T-cell (primary cell): ENCODE measurements at regions of chr15 and their contacts with region 1.

Region 1: DNA sequence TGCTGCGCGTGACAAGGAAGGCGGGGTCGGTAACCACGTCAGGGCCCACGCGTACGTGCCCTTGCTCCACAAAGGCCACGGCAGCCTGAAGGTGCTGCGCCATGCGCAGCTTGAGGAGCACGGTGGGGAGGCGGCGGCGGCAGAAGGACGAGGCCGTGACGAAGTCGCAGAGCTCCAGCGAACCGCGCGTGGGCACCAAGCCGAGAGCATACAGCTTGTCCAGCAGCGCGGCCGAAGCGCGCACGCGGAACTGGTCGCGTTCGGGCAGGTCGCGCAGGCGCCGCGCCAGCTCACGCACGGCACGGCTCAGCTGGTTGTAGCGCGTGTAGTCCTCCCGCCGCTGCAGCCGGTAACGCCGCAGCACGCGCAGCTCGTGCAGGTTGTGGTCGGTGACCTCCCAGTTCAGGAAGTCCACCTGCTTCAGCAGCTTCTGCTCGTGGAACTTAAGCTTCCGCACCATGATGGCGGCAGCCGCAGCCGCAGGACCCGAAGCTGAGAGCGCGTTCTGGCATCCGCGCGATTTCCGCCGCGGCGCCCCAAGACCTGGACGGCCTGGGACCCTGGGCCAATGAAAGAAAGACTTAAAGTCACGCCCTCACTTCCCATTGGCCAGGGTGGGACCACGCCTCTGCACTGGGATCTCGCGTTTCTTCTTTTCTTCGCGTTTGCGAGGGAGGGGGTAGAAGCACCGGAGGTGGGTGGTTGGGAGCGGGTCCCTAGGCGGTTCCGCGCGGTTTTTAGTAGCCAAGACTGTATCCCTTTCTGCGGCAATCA is at the start of gene IMP3:
- DNase-seq: peak; percentile 79 to 97 (median 92)
- ATAC-seq: peak; percentile 89 to 95 (median 92)
- H3K4me3 ChIP-seq: peak within 1 kb of the TSS; percentile 86
- H3K4me3 Mint-ChIP-seq: peak within 1 kb of the TSS; percentile 91 to 93 (median 91)
- H3K27ac ChIP-seq: peak within 1 kb of the TSS; percentile 81
- H3K27ac Mint-ChIP-seq: peak within 1 kb of the TSS; percentile 94 to 95
- H3K4me1 ChIP-seq: peaks cover 26 to 54% of the 10 kb centered on the region in 2 experiments
- H3K4me1 Mint-ChIP-seq: peaks cover 38 to 51% (median 39%) of the 10 kb centered on the region in 3 donors
- H3K27me3 ChIP-seq: no peaks in the 10 kb centered on the region
- H3K27me3 Mint-ChIP-seq: no peaks in the 10 kb centered on the region
- total RNA-seq, gene IMP3: 39.6 to 86.6 (median 81.8) TPM

Region 2: GRCh38 chr15:75367913-75368688 is 271.8 kb before region 1 on chr15 and contains the start of gene MAN2C1:
- CTCF ChIA-PET with region 1: interaction called in 1 of 2 experiments, 18 read pairs
- POLR2A ChIA-PET with region 1: no interaction called
- DNase-seq: peak; percentile 73 to 96 (median 84)
- ATAC-seq: peak; percentile 92 to 94 (median 92)
- H3K4me3 ChIP-seq: peak within 1 kb of the TSS; percentile 91 to 93
- H3K4me3 Mint-ChIP-seq: peak within 1 kb of the TSS; percentile 89 to 91 (median 90)
- H3K27ac ChIP-seq: peak within 1 kb of the TSS; percentile 92
- H3K27ac Mint-ChIP-seq: peak within 1 kb of the TSS; percentile 95
- H3K4me1 ChIP-seq: peaks cover 3 to 18% of the 10 kb centered on the region in 2 experiments
- H3K4me1 Mint-ChIP-seq: peaks cover 16 to 27% (median 26%) of the 10 kb centered on the region in 3 donors
- H3K27me3 ChIP-seq: no peaks in the 10 kb centered on the region
- H3K27me3 Mint-ChIP-seq: no peaks in the 10 kb centered on the region
- total RNA-seq, gene MAN2C1: 357 to 529 (median 447) TPM

Region 3: GRCh38 chr15:75407083-75407482 is 232.8 kb before region 1 on chr15:
- CTCF ChIA-PET with region 1: no interaction called
- POLR2A ChIA-PET with region 1: interaction called in 1 of 2 experiments, 12 read pairs
- DNase-seq: no peak
- ATAC-seq: no peak
- H3K4me3 ChIP-seq: no peak overlapping the region
- H3K4me3 Mint-ChIP-seq: no peak overlapping the region
- H3K27ac ChIP-seq: no peak overlapping the region
- H3K27ac Mint-ChIP-seq: no peak overlapping the region
- H3K4me1 ChIP-seq: no peaks in the 10 kb centered on the region
- H3K4me1 Mint-ChIP-seq: peaks cover 7 to 13% (median 12%) of the 10 kb centered on the region in 3 donors
- H3K27me3 ChIP-seq: no peaks in the 10 kb centered on the region
- H3K27me3 Mint-ChIP-seq: no peaks in the 10 kb centered on the region

Region 4: GRCh38 chr15:75453703-75454470 is 186.0 kb before region 1 on chr15:
- CTCF ChIA-PET with region 1: interaction called in 1 of 2 experiments, 18 read pairs
- POLR2A ChIA-PET with region 1: interaction called, 9 to 11 read pairs
- DNase-seq: peak; percentile 84 to 99 (median 97)
- ATAC-seq: peak; percentile 41 to 48 (median 45)
- H3K4me3 ChIP-seq: peak overlapping the region; percentile 78 to 93
- H3K4me3 Mint-ChIP-seq: peak overlapping the region; percentile 94 to 100 (median 95)
- H3K27ac ChIP-seq: peak overlapping the region; percentile 88
- H3K27ac Mint-ChIP-seq: peak overlapping the region; percentile 98 to 99
- H3K4me1 ChIP-seq: peaks cover 22 to 41% of the 10 kb centered on the region in 2 experiments
- H3K4me1 Mint-ChIP-seq: peaks cover 38 to 46% (median 40%) of the 10 kb centered on the region in 3 donors
- H3K27me3 ChIP-seq: no peaks in the 10 kb centered on the region
- H3K27me3 Mint-ChIP-seq: no peaks in the 10 kb centered on the region

Region 5: DNA sequence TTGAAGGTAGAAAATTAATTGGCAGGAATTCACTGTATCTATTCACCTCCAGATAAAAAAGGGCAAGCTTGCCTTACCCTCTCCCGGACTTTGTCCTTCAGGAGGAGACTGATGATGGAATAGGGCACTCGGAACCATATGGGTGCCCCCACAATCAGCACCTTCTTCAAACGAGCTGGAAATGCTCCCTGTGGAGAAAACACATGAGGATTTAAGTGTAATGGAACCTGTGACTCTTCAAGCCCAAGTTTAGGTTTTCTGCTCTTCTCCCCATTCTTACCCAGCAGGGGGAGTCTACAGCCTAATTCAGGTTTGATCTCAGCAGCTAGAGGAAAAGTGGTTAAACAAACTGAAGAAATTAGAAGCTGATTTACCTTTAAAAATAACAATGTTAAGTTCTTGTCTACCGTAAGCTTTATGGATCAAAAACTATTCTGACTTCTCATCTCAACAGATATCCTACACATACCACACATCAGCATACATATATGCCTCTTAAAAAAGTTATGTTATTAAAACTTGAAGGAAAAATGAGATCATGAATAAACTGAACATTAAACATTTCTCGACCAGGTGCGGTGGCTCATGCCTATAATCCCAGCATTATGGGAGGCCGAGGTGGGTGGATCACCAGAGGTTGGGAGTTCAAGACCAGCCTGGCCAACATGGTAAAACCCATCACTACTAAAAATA is 130.9 kb before region 1 on chr15:
- CTCF ChIA-PET with region 1: interaction called, 4 to 28 read pairs
- POLR2A ChIA-PET with region 1: no interaction called
- DNase-seq: peak in 19 of 35 experiments; percentile 1 to 62 (median 16)
- ATAC-seq: peak in 2 of 4 experiments; percentile 33 to 52
- H3K4me3 ChIP-seq: no peak overlapping the region
- H3K4me3 Mint-ChIP-seq: no peak overlapping the region
- H3K27ac ChIP-seq: no peak overlapping the region
- H3K27ac Mint-ChIP-seq: no peak overlapping the region
- H3K4me1 ChIP-seq: no peaks in the 10 kb centered on the region
- H3K4me1 Mint-ChIP-seq: peaks cover 2 to 5% (median 4%) of the 10 kb centered on the region in 3 donors
- H3K27me3 ChIP-seq: no peaks in the 10 kb centered on the region
- H3K27me3 Mint-ChIP-seq: no peaks in the 10 kb centered on the region

Region 6: GRCh38 chr15:75606711-75607699 is 32.9 kb before region 1 on chr15:
- CTCF ChIA-PET with region 1: interaction called in 1 of 2 experiments, 11 read pairs
- POLR2A ChIA-PET with region 1: no interaction called
- DNase-seq: peak in 26 of 35 experiments; percentile 3 to 49 (median 16)
- ATAC-seq: peak; percentile 80 to 84 (median 82)
- H3K4me3 ChIP-seq: peak overlapping the region in 1 of 2 donors; percentile 21
- H3K4me3 Mint-ChIP-seq: peak overlapping the region; percentile 40 to 62 (median 59)
- H3K27ac ChIP-seq: peak overlapping the region; percentile 86
- H3K27ac Mint-ChIP-seq: peak overlapping the region; percentile 92 to 99
- H3K4me1 ChIP-seq: peaks cover 36 to 47% of the 10 kb centered on the region in 2 experiments
- H3K4me1 Mint-ChIP-seq: peaks cover 39 to 53% (median 43%) of the 10 kb centered on the region in 3 donors
- H3K27me3 ChIP-seq: no peaks in the 10 kb centered on the region
- H3K27me3 Mint-ChIP-seq: no peaks in the 10 kb centered on the region

Region 7: DNA sequence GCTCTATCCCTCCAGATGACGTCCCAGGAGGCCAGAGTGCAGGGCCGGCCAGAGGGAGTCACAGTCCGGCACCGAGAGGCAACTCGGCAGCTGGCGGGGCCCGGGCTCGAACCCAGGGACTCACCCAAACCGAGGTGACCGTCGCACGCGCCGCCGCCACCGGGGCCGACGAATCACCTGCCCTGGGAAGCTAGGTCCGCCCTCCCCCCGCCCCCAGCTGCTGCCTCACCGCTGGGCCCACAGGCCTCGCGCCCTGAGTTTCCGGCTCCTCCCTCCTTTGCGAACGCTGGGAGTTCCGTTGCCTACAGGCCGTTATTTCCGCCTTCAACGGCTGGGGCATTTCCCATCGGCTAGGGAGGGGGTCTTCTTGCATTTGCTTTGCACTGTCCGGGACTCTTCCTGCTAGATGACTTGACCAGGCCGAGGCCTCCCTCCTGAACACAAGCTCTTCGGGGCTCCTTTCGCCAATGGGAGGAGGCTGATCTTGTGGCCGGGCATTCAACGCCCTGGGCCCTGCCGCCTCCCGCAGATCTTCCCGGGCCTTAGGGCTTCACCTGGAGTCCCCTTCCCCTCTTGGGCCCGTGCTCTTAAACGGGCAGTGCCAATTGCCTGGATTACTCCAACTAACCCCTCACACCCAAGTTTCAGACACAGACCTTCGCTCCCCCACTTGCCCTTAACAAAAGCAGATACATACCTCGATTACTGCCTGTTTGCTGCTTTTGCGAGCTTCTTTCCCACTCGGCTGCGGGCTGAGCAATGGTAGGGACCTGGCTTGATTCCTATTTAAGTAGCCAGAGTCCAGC is 14.2 kb before region 1 on chr15 and contains the start of gene SNUPN:
- CTCF ChIA-PET with region 1: interaction called in 1 of 2 experiments, 12 read pairs
- POLR2A ChIA-PET with region 1: interaction called in 1 of 2 experiments, 5 read pairs
- DNase-seq: peak; percentile 82 to 97 (median 91)
- ATAC-seq: peak; percentile 92 to 95 (median 94)
- H3K4me3 ChIP-seq: peak within 1 kb of the TSS; percentile 88
- H3K4me3 Mint-ChIP-seq: peak within 1 kb of the TSS; percentile 91 to 96 (median 92)
- H3K27ac ChIP-seq: peak within 1 kb of the TSS; percentile 91
- H3K27ac Mint-ChIP-seq: peak within 1 kb of the TSS; percentile 97 to 99
- H3K4me1 ChIP-seq: peaks cover 8 to 25% of the 10 kb centered on the region in 2 experiments
- H3K4me1 Mint-ChIP-seq: peaks cover 28 to 33% (median 30%) of the 10 kb centered on the region in 3 donors
- H3K27me3 ChIP-seq: no peaks in the 10 kb centered on the region
- H3K27me3 Mint-ChIP-seq: no peaks in the 10 kb centered on the region
- total RNA-seq, gene SNUPN: 17.7 to 26.7 (median 20.8) TPM